ENCODE measurements at regions of chr5 and their contacts with region 1.

Region 1: DNA sequence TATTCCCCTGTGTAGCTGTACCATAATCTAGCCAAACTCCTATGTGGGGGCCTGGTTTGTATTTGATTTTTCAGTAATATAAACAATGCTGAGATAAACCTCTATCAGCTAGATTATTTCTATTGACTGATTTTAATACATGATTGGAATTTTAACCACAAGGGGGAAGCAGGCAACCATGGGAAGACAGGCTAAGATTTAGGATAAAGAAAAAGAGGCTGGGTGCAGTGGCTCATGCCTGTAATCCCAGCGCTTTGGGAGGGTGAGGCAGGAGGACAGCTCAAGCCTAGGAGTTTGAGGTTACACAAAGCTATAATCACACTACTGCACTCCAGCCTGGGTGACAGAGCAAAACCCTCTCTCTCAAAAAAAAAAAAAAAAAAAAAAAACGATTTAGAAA is 18.1 kb upstream of the GPX3 start:
- DNase-seq: no peak
- ATAC-seq: peak in 2 of 4 donors; percentile 28 to 35
- H3K4me3 ChIP-seq: no peak overlapping the region
- H3K27ac ChIP-seq: no peak overlapping the region
- H3K4me1 ChIP-seq: peaks cover 0 to 46% (median 32%) of the 10 kb centered on the region in 12 donors
- H3K27me3 ChIP-seq: no peaks in the 10 kb centered on the region
- CTCF ChIP-seq: peak; percentile 46 to 73 (median 64)
- POLR2A ChIP-seq: no peak

Region 2: GRCh38 chr5:151037561-151038411 is 35.5 kb after region 1 on chr5:
- intact Hi-C with region 1: no loop called
- DNase-seq: peak in 2 of 5 donors; percentile 31 to 39
- ATAC-seq: peak; percentile 30 to 65 (median 52)
- H3K4me3 ChIP-seq: no peak overlapping the region
- H3K27ac ChIP-seq: peak overlapping the region; percentile 53 to 85 (median 75)
- H3K4me1 ChIP-seq: peaks cover 12 to 45% (median 32%) of the 10 kb centered on the region in 12 donors
- H3K27me3 ChIP-seq: no peaks in the 10 kb centered on the region
- CTCF ChIP-seq: no peak
- POLR2A ChIP-seq: no peak

Region 3: GRCh38 chr5:151051066-151051930 is 49.0 kb after region 1 on chr5:
- intact Hi-C with region 1: loop called (anchors 1 to 5 kb)
- DNase-seq: peak; percentile 82 to 87 (median 84)
- ATAC-seq: peak; percentile 35 to 88 (median 84)
- H3K4me3 ChIP-seq: no peak overlapping the region
- H3K27ac ChIP-seq: peak overlapping the region in 4 of 12 donors; percentile 23 to 50 (median 40)
- H3K4me1 ChIP-seq: peaks cover 0 to 31% (median 7%) of the 10 kb centered on the region in 12 donors
- H3K27me3 ChIP-seq: no peaks in the 10 kb centered on the region
- CTCF ChIP-seq: peak; percentile 77 to 92 (median 88)
- POLR2A ChIP-seq: no peak

Region 4: DNA sequence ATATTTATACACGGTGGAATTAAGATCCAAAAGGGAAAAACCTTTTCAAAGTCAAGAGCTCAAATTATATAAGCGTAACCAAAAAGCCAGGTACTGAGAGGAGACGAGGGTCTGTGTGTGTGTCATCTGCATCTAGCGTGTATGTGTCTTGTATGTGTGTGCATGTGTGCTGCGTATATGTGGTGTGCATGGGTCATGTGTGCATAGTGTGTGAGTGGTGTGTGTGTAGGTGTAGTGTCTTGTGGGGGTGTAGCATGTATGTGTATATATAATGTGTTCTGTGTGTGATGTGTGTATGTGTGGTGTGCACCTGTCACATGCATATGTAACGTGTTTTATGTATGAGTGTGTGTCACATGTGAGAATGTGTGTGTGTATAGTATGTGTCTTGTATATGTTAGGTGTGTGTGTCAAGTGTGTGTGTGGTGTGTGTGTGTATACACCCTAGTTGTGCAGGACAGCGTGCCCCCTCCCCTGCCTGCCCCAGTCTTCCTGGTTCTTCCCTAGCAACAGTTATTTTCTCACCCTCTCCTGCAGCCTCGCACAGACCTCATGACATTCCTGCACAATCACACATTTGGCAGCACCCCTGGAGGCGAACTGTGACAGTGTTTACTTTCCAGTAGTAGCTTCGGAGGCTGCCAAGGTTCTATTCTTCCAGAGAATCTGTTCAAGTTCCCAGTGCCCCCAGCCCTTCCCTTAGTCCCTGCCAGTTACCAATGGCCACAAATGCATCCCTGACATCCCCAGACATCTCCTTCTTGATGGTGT is 105.7 kb after region 1 on chr5:
- intact Hi-C with region 1: loop called in 2 of 10 experiments (anchors 2 to 5 kb)
- DNase-seq: peak in 4 of 5 donors; percentile 62 to 81 (median 70)
- ATAC-seq: peak; percentile 73 to 90 (median 80)
- H3K4me3 ChIP-seq: no peak overlapping the region
- H3K27ac ChIP-seq: peak overlapping the region in 10 of 12 donors; percentile 49 to 93 (median 76)
- H3K4me1 ChIP-seq: peaks cover 2 to 55% (median 32%) of the 10 kb centered on the region in 12 donors
- H3K27me3 ChIP-seq: no peaks in the 10 kb centered on the region
- CTCF ChIP-seq: peak in 3 of 12 donors; percentile 9 to 18 (median 13)
- POLR2A ChIP-seq: no peak

Region 5: GRCh38 chr5:151115274-151115905 is 113.1 kb after region 1 on chr5:
- intact Hi-C with region 1: loop called (anchors 1 to 5 kb)
- DNase-seq: peak; percentile 71 to 84 (median 76)
- ATAC-seq: peak; percentile 23 to 77 (median 62)
- H3K4me3 ChIP-seq: no peak overlapping the region
- H3K27ac ChIP-seq: peak overlapping the region in 1 of 12 donors; percentile 32
- H3K4me1 ChIP-seq: peaks cover 0 to 20% (median 9%) of the 10 kb centered on the region in 12 donors
- H3K27me3 ChIP-seq: no peaks in the 10 kb centered on the region
- CTCF ChIP-seq: peak; percentile 87 to 99 (median 94)
- POLR2A ChIP-seq: no peak

Region 6: GRCh38 chr5:151157426-151158286 is 155.4 kb after region 1 on chr5 and contains the start of gene ANXA6:
- intact Hi-C with region 1: loop called in 4 of 10 experiments (anchors 5 kb)
- DNase-seq: peak; percentile 91 to 95 (median 92)
- ATAC-seq: peak; percentile 97 to 99 (median 98)
- H3K4me3 ChIP-seq: peak within 1 kb of the TSS; percentile 58 to 97 (median 86)
- H3K27ac ChIP-seq: peak within 1 kb of the TSS; percentile 70 to 94 (median 90)
- H3K4me1 ChIP-seq: peaks cover 6 to 54% (median 46%) of the 10 kb centered on the region in 12 donors
- H3K27me3 ChIP-seq: no peaks in the 10 kb centered on the region
- CTCF ChIP-seq: no peak
- POLR2A ChIP-seq: peak in 1 of 2 donors; percentile 74
- total RNA-seq, gene ANXA6: 179 to 287 (median 220) TPM

Region 7: GRCh38 chr5:151164686-151165392 is 162.6 kb after region 1 on chr5:
- intact Hi-C with region 1: loop called in 5 of 10 experiments (anchors 2 to 5 kb)
- DNase-seq: peak; percentile 60 to 76 (median 74)
- ATAC-seq: peak; percentile 87 to 92 (median 90)
- H3K4me3 ChIP-seq: no peak overlapping the region
- H3K27ac ChIP-seq: no peak overlapping the region
- H3K4me1 ChIP-seq: peaks cover 0 to 20% (median 9%) of the 10 kb centered on the region in 12 donors
- H3K27me3 ChIP-seq: no peaks in the 10 kb centered on the region
- CTCF ChIP-seq: peak; percentile 85 to 96 (median 93)
- POLR2A ChIP-seq: no peak